Activated naive CD4-positive, alpha-beta T cell treated with anti-CD3 and anti-CD28 coated beads for 36 hours (primary cell): ENCODE measurements at regions of chr22 and their contacts with region 1.

Region 1: DNA sequence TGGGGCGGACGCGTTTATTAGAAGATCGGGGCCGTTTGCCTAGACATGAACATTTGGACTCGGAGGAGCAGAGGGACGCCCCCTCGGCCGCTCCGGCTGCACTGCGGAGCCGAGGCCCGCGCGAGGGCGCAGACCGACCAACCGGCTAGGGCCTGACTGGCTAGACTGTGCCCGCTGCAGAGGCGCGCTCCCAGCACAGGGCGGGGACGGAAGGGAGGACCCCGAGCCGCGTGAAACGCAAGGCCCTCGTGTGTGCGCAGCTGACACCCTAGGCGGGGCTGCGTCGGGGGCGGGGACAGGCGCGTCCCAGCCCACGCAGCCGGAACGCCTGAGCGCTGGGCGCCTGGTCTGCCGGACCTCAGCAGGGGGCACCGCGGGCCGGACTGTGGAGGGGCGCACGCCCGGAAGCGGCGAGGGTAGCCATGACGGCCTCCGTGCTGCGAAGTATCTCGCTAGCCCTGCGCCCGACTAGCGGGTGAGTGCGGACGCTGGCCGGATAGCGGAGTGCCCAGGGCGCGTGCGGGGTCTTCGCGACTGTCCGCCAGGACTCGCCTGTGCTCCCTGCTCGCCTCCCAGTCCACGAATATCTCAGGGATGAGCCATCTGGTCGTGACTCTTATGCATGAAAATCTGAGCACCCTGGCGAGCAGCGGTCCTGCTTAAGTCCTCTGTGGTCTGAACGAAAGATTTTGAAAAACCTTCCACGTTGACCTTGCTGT is at the start of gene MRPL40:
- DNase-seq: peak; percentile 92
- H3K4me3 Mint-ChIP-seq: peak within 1 kb of the TSS; percentile 73
- H3K27ac Mint-ChIP-seq: peak within 1 kb of the TSS; percentile 88
- H3K4me1 Mint-ChIP-seq: peaks cover 44% of the 10 kb centered on the region
- H3K27me3 Mint-ChIP-seq: no peaks in the 10 kb centered on the region
- total RNA-seq, gene MRPL40: 32.6 to 34.9 TPM

Region 2: DNA sequence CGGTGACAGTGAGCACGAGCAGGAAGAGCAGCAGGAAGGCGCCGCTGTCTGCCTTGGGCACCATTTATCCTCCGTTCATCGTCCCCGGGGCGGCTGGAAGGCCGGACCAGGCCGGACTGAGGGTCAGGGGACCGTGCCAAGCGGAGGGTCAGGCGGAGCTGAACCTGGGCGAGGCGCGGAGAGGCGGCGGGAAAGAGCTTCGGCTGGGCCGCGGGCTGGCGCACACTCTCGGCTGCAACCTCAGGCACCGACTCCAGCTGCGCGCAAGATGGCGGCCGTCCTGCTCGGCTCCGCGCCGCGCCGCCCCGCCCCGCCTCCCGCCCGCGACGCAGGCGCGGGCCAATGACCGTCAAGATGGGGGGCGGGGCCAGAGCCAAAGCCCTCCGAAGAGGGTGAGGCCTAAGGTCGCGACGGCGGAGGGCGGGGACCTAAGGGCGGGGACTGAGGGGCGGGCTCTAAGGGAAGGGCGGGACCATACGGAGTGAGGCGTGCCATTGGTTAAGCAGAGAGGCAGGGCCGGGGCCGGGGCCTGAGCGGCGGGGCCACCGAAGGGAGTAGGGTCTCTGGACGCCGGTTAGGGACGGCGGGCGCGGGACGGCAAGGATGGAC is 310.0 kb before region 1 on chr22 and contains the start of gene DGCR2:
- CTCF ChIA-PET with region 1: no interaction called
- intact Hi-C with region 1: loop called (anchors 5 kb)
- DNase-seq: peak; percentile 98
- H3K4me3 Mint-ChIP-seq: peak within 1 kb of the TSS; percentile 84
- H3K27ac Mint-ChIP-seq: peak within 1 kb of the TSS; percentile 66
- H3K4me1 Mint-ChIP-seq: peaks cover 47% of the 10 kb centered on the region
- H3K27me3 Mint-ChIP-seq: no peaks in the 10 kb centered on the region
- total RNA-seq, gene DGCR2: 15.4 to 16.4 TPM

Region 3: DNA sequence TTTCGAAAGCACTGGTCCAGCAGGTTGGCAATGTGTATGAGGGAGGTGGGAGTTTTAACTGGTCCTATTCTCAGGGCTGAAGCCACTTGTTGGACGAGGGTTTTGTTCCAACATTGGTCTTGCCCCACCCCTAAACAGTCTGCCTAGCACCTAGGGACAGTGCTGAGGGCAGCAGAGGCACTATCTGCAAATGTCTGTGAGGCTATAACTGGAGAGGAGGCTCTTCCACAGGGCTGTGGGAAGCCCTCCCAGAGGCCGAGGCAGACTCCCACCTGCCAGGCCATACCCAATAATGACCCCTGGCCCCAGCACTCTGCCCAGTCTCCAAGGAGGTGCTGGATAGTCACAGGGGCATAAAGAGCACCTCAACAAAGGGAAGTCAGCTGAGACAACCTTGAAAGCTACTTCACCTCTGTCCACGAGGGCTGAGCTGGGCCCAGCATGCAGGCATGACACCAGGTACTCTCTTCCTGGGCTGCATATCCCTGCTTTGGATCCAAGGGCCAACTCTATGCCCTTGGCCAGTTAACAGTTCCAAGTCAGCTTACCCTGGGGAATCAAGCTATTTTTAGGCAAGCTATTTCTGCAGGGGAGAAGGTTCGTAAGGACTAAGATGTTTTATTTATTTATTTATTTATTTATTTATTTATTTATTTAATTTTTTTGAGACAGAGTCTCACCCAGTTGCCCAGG is 213.6 kb before region 1 on chr22:
- CTCF ChIA-PET with region 1: no interaction called
- intact Hi-C with region 1: loop called (anchors 1 kb)
- DNase-seq: no peak
- H3K4me3 Mint-ChIP-seq: no peak overlapping the region
- H3K27ac Mint-ChIP-seq: no peak overlapping the region
- H3K4me1 Mint-ChIP-seq: peaks cover 4% of the 10 kb centered on the region
- H3K27me3 Mint-ChIP-seq: no peaks in the 10 kb centered on the region

Region 4: GRCh38 chr22:19419464-19420178 is 12.7 kb before region 1 on chr22:
- CTCF ChIA-PET with region 1: no interaction called
- intact Hi-C with region 1: loop called (anchors 1 kb)
- DNase-seq: peak; percentile 71
- H3K4me3 Mint-ChIP-seq: no peak overlapping the region
- H3K27ac Mint-ChIP-seq: peak overlapping the region; percentile 81
- H3K4me1 Mint-ChIP-seq: peaks cover 56% of the 10 kb centered on the region
- H3K27me3 Mint-ChIP-seq: no peaks in the 10 kb centered on the region

Region 5: DNA sequence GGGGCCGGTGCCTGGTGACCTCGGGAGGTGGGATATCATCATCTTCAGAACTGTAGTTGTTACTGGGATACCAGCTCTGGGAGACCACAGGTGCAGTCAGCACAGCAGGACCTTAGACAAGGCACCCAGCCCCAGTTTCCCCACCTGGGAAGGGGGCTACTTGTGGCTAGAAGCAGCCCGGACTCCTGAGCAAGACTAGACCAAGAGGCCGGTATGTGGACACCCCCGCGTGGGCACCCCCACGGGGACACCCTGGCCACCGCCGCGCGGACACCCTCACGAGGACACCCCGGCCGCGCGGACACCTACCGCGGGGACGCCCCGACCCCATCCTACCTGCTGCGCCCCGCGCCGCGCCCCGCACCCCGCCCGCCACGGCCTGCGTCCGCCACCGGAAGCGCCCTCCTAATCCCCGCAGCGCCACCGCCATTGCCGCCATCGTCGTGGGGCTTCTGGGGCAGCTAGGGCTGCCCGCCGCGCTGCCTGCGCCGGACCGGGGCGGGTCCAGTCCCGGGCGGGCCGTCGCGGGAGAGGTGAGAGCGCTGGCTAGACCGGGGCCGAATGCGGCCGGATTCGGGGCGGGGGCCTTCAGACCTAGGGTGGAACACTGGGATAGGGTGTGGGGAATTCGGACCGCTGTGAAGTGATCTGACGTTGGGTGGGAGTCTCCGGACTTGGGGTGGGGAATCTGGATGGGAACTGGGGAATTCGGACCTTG is 509.2 kb after region 1 on chr22 and contains the starts of genes COMT and TXNRD2:
- CTCF ChIA-PET with region 1: no interaction called
- intact Hi-C with region 1: loop called (anchors 2 kb)
- DNase-seq: peak; percentile 77
- H3K4me3 Mint-ChIP-seq: peak within 1 kb of the TSS; percentile 96
- H3K27ac Mint-ChIP-seq: peak within 1 kb of the TSS; percentile 93
- H3K4me1 Mint-ChIP-seq: peaks cover 29% of the 10 kb centered on the region
- H3K27me3 Mint-ChIP-seq: no peaks in the 10 kb centered on the region
- total RNA-seq, gene COMT: 53.7 to 56.8 TPM
- total RNA-seq, gene TXNRD2: 22.9 to 23.6 TPM